Activated T-helper 1 cell treated with anti-CD3 and anti-CD28 coated beads, Interleukin-12 subunit alpha, Interleukin-12 subunit beta, Interleukin-2, Interleukin-4 antibody, amounts not matched to agents 30 ng/mL and 10 ng/mL and 1 ng/mL, durations not matched to agents 14 hours and 24 hours and 36 hours (primary cell): ENCODE measurements at regions of chr10 and their contacts with region 1.

Region 1: GRCh38 chr10:22714479-22715289 is at the start of gene PIP4K2A:
- DNase-seq: peak; percentile 72
- H3K4me3 Mint-ChIP-seq: peak within 1 kb of the TSS; percentile 88
- H3K27ac Mint-ChIP-seq: peak within 1 kb of the TSS; percentile 85
- H3K4me1 Mint-ChIP-seq: peaks cover 39% of the 10 kb centered on the region
- H3K27me3 Mint-ChIP-seq: no peaks in the 10 kb centered on the region
- total RNA-seq, gene PIP4K2A: 92.7 and 104 TPM in 2 replicates

Region 2: DNA sequence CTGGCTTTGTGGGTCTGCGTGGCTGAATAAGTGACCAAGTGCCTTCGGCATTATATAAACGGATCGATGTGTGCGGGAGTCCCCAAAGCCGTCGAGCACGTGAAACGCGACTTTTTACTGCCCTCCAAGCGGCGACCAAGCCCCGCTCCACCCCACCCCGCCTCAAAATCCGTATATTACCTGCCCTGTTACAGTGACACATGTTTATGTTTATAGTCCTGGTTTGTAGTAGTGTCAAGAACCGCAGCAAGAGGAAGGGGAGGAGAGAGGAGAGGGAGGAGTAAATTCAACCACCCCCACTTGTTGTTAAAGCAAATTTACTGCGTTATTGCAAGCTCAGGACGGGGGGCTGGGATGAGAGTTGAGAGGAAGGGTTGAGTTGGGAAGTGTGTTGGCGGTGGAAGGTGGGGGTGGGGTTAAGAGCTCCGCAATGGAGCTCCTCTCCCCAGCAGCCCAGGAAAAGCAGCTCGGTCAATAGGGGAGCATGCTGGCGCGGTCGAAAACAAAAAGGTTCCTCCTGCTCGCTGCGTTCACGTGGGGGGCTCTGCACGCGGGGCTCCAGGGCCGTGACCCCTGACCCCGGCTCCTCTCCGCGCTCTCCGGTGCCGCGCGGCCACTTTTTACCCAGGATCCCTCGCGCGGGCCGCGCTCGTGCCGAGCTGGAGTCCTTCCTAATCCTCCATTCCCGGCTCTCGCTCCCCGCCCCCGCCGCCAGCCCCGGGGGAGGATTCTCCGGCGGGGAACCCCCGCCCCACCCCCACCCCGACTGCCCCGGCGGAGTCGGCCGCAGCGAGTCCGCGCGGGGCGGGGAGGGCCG is 1189.1 kb before region 1 on chr10 and contains the start of gene SKIDA1:
- intact Hi-C with region 1: loop called (anchors 10 kb)
- DNase-seq: peak; percentile 51
- H3K4me3 Mint-ChIP-seq: peak within 1 kb of the TSS; percentile 85
- H3K27ac Mint-ChIP-seq: peak within 1 kb of the TSS; percentile 94
- H3K4me1 Mint-ChIP-seq: peaks cover 39% of the 10 kb centered on the region
- H3K27me3 Mint-ChIP-seq: peaks cover 44% of the 10 kb centered on the region
- total RNA-seq, gene SKIDA1: 0.05 and 0.15 TPM in 2 replicates

Region 3: GRCh38 chr10:22436884-22437619 is 277.6 kb before region 1 on chr10:
- intact Hi-C with region 1: loop called (anchors 5 kb)
- DNase-seq: peak; percentile 80
- H3K4me3 Mint-ChIP-seq: peak overlapping the region; percentile 91
- H3K27ac Mint-ChIP-seq: peak overlapping the region; percentile 96
- H3K4me1 Mint-ChIP-seq: peaks cover 49% of the 10 kb centered on the region
- H3K27me3 Mint-ChIP-seq: peaks cover 9% of the 10 kb centered on the region

Region 4: DNA sequence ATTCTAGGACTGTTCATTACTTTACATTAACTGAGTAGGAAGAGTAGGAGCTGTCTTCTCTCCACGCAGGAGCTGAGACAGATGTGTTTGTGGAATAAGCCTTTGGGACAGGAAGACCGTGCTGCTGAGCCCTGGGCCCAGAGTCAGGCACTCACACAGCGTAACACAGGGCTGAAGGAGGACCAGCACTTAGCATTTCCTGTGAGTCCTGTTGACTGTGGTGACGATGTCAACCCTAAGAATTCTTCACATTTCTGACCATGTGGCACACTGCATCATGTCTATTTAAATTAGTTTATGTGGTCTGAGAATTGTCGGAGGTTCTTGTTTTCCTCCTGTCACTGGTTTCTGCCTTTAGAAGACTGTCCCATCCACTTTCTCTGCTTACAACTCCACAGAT is 117.5 kb before region 1 on chr10:
- intact Hi-C with region 1: loop called (anchors 5 kb)
- DNase-seq: no peak
- H3K4me3 Mint-ChIP-seq: no peak overlapping the region
- H3K27ac Mint-ChIP-seq: peak overlapping the region; percentile 45
- H3K4me1 Mint-ChIP-seq: peaks cover 55% of the 10 kb centered on the region
- H3K27me3 Mint-ChIP-seq: no peaks in the 10 kb centered on the region

Region 5: GRCh38 chr10:22648547-22648961 is 66.1 kb before region 1 on chr10:
- intact Hi-C with region 1: loop called (anchors 1 kb)
- DNase-seq: no peak
- H3K4me3 Mint-ChIP-seq: peak overlapping the region; percentile 75
- H3K27ac Mint-ChIP-seq: peak overlapping the region; percentile 96
- H3K4me1 Mint-ChIP-seq: peaks cover 91% of the 10 kb centered on the region
- H3K27me3 Mint-ChIP-seq: no peaks in the 10 kb centered on the region

Region 6: GRCh38 chr10:22693371-22693784 is 21.3 kb before region 1 on chr10:
- intact Hi-C with region 1: loop called (anchors 1 kb)
- DNase-seq: no peak
- H3K4me3 Mint-ChIP-seq: peak overlapping the region; percentile 68
- H3K27ac Mint-ChIP-seq: peak overlapping the region; percentile 91
- H3K4me1 Mint-ChIP-seq: peaks cover 67% of the 10 kb centered on the region
- H3K27me3 Mint-ChIP-seq: no peaks in the 10 kb centered on the region

Region 7: GRCh38 chr10:22727663-22728062 is 13.0 kb after region 1 on chr10:
- intact Hi-C with region 1: no loop called
- DNase-seq: no peak
- H3K4me3 Mint-ChIP-seq: no peak overlapping the region
- H3K27ac Mint-ChIP-seq: no peak overlapping the region
- H3K4me1 Mint-ChIP-seq: peaks cover 13% of the 10 kb centered on the region
- H3K27me3 Mint-ChIP-seq: peaks cover 10% of the 10 kb centered on the region

Region 8: GRCh38 chr10:22765660-22766547 is 51.2 kb after region 1 on chr10:
- intact Hi-C with region 1: no loop called
- DNase-seq: no peak
- H3K4me3 Mint-ChIP-seq: no peak overlapping the region
- H3K27ac Mint-ChIP-seq: no peak overlapping the region
- H3K4me1 Mint-ChIP-seq: no peaks in the 10 kb centered on the region
- H3K27me3 Mint-ChIP-seq: peaks cover 14% of the 10 kb centered on the region